RWPE1 (cell line): ENCODE measurements at regions of chr5 and their contacts with region 1.

Region 1: GRCh38 chr5:151447174-151448037 is at the start of gene SLC36A1:
- DNase-seq: peak; percentile 97
- H3K27ac ChIP-seq: peak within 1 kb of the TSS; percentile 70
- CTCF ChIP-seq: peak; percentile 99

Region 2: DNA sequence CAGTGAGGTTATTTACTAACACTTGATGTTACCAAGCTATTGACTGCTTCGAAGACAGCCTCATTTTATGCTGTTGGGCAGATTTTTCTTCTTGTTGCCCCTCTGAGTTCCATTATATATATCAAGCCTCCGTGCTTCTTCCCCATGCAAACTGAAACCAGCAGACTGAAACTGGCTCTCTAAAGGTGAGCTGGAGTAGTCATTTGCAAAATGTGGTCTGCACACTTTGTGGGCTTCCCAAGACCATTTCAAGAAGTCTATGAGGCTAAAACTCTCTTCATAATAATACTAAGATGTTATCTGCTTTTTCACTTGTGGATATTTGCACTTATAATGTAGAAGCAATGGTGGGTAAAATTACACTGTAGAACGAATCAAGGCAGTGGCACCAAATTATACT is 13.9 kb after region 1 on chr5:
- CTCF ChIA-PET with region 1: interaction called, 15 read pairs
- POLR2A ChIA-PET with region 1: no interaction called
- DNase-seq: no peak
- H3K27ac ChIP-seq: no peak overlapping the region
- CTCF ChIP-seq: no peak